H1 (cell line): ENCODE measurements at regions of chr9 and their contacts with region 1.

Region 1: GRCh38 chr9:35657546-35658136 is at the start of gene RMRP:
- DNase-seq: peak; percentile 96 to 98
- H3K4me3 ChIP-seq: peak within 1 kb of the TSS; percentile 70 to 92 (median 86)
- H3K27ac ChIP-seq: peak within 1 kb of the TSS; percentile 99
- H3K4me1 ChIP-seq: peaks cover 0 to 2% (median 0%) of the 10 kb centered on the region in 4 experiments; a peak in 4 of 7 replicates
- H3K27me3 ChIP-seq: peaks cover 0 to 7% (median 0%) of the 10 kb centered on the region in 4 experiments; a peak in 1 of 7 replicates
- CTCF ChIP-seq: peak in 2 of 3 experiments; percentile 4 to 8; a peak in 1 of 4 replicates
- EP300 ChIP-seq: peak in 1 of 2 experiments; percentile 91; a peak in 1 of 3 replicates
- POLR2A ChIP-seq: peak in 1 of 2 experiments; percentile 32; a peak in 2 of 3 replicates
- RAD21 ChIP-seq: peak in 1 of 2 experiments; percentile 7; a peak in 2 of 4 replicates
- total RNA-seq, gene RMRP: 14,987 and 16,528 TPM in 2 replicates

Region 2: DNA sequence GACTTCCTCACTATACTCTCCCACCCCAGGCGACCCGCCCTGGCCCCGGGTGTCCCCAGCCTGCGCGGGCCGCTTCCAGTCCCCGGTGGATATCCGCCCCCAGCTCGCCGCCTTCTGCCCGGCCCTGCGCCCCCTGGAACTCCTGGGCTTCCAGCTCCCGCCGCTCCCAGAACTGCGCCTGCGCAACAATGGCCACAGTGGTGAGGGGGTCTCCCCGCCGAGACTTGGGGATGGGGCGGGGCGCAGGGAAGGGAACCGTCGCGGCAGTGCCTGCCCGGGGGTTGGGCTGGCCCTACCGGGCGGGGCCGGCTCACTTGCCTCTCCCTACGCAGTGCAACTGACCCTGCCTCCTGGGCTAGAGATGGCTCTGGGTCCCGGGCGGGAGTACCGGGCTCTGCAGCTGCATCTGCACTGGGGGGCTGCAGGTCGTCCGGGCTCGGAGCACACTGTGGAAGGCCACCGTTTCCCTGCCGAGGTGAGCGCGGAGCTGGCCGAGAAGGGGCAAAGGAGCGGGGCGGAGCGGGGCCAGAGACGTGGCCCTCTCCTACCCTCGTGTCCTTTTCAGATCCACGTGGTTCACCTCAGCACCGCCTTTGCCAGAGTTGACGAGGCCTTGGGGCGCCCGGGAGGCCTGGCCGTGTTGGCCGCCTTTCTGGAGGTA is 18.2 kb after region 1 on chr9:
- CTCF ChIA-PET with region 1: interaction called, 29 read pairs
- POLR2A ChIA-PET with region 1: interaction called, 55 read pairs
- DNase-seq: peak in 1 of 2 experiments; percentile 98
- H3K4me3 ChIP-seq: peak overlapping the region; percentile 55 to 69 (median 60)
- H3K27ac ChIP-seq: no peak overlapping the region
- H3K4me1 ChIP-seq: peaks cover 0 to 15% (median 3%) of the 10 kb centered on the region in 4 experiments; a peak in 5 of 7 replicates
- H3K27me3 ChIP-seq: peaks cover 0 to 3% (median 3%) of the 10 kb centered on the region in 4 experiments; a peak in 4 of 7 replicates
- CTCF ChIP-seq: no peak
- EP300 ChIP-seq: no peak
- POLR2A ChIP-seq: peak; percentile 43 to 55; a peak in 2 of 3 replicates
- RAD21 ChIP-seq: no peak

Region 3: GRCh38 chr9:35716230-35716629 is 58.6 kb after region 1 on chr9:
- CTCF ChIA-PET with region 1: interaction called, 90 read pairs
- POLR2A ChIA-PET with region 1: no interaction called
- DNase-seq: no peak
- H3K4me3 ChIP-seq: no peak overlapping the region
- H3K27ac ChIP-seq: no peak overlapping the region
- H3K4me1 ChIP-seq: no peaks in the 10 kb centered on the region
- H3K27me3 ChIP-seq: no peaks in the 10 kb centered on the region
- CTCF ChIP-seq: peak in 1 of 3 experiments; percentile 4; a peak in 1 of 4 replicates
- EP300 ChIP-seq: no peak
- POLR2A ChIP-seq: no peak
- RAD21 ChIP-seq: no peak

Region 4: GRCh38 chr9:35844716-35845270 is 187.2 kb after region 1 on chr9:
- CTCF ChIA-PET with region 1: no interaction called
- POLR2A ChIA-PET with region 1: no interaction called
- DNase-seq: no peak
- H3K4me3 ChIP-seq: peak overlapping the region in 1 of 4 experiments; percentile 70; a peak in 2 of 8 replicates
- H3K27ac ChIP-seq: no peak overlapping the region
- H3K4me1 ChIP-seq: peaks cover 11 to 25% (median 14%) of the 10 kb centered on the region in 4 experiments
- H3K27me3 ChIP-seq: peaks cover 0 to 12% (median 9%) of the 10 kb centered on the region in 4 experiments; a peak in 6 of 7 replicates
- CTCF ChIP-seq: no peak
- EP300 ChIP-seq: no peak
- POLR2A ChIP-seq: no peak
- RAD21 ChIP-seq: no peak

Region 5: DNA sequence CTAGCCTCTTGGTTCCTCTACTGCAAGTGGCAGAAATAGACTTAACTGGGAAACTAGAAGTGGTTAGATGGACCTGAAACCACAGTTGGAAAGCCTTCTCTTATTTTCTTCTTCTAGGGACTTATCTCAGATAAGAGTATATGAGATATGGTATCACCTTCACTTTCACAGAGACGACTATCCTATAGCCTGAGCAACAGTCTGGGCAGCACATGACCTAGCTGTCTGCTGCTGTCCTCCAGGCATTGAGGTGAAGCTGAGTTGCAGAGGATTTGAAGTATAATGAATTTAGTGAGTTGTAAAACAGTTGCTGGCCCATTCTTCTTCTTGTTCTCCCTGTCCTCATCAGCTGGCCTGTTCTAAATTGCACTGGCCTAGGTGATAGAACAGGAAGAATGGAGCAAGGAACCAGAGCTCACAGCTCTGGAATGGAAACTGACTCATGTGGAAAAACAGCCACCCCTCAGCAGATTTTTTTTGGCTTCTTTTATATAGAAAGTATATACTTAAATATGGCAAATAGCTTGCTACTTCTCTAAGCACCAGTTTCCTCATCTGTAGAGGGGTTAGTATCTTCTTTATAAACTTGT is 406.9 kb after region 1 on chr9:
- CTCF ChIA-PET with region 1: no interaction called
- POLR2A ChIA-PET with region 1: no interaction called
- DNase-seq: no peak
- H3K4me3 ChIP-seq: no peak overlapping the region
- H3K27ac ChIP-seq: no peak overlapping the region
- H3K4me1 ChIP-seq: no peaks in the 10 kb centered on the region
- H3K27me3 ChIP-seq: no peaks in the 10 kb centered on the region
- CTCF ChIP-seq: no peak
- EP300 ChIP-seq: no peak
- POLR2A ChIP-seq: no peak
- RAD21 ChIP-seq: no peak